GM10248 (cell line): ENCODE measurements at regions of chr4 and their contacts with region 1.

Region 1: GRCh38 chr4:82428969-82429727 is 1.1 kb downstream of the HNRNPDL start:
- DNase-seq: peak; percentile 95
- CTCF ChIP-seq: peak; percentile 93

Region 2: DNA sequence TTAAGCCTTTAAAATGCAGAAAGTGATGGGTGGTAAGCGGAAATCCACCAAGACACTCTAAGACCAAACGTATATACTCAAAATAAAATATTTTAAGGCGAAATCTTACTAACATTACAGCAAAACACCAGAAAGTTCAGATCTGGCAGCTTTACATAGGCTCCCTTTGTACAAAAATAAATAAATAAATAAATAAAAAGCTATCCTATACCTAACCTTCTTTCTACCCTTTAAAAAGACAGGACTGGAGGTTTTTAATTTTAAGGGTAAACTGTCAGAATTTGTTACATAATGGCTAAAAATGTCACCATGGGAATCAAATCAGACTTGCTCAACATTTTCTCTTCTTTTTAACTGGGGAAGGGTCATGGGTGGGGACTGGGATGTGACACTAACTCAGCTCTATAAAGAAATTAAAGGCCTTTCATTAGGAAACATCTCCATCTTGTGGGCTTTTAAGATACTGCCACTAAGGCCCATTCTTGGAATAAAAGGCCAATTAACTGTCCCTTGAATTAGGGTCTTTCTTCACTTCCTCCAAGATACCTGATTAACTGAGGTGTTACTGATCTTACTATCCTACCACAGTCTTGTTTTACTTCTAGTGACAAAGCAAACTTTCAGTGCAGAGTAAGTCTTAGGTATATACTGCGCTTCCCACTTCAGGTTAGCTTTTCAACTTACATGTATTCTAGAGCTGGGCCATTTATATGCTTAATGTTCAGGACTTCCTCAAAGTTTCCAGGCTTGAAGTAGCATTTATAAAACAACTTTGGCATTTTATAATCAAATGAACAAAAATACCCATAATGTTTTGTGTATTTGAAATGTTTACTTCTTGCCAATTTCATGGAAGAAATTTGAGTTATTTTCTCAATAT is 68.6 kb before region 1 on chr4:
- CTCF ChIA-PET with region 1: interaction called, 11 read pairs
- POLR2A ChIA-PET with region 1: interaction called, 4 read pairs
- DNase-seq: no peak
- CTCF ChIP-seq: peak; percentile 58

Region 3: DNA sequence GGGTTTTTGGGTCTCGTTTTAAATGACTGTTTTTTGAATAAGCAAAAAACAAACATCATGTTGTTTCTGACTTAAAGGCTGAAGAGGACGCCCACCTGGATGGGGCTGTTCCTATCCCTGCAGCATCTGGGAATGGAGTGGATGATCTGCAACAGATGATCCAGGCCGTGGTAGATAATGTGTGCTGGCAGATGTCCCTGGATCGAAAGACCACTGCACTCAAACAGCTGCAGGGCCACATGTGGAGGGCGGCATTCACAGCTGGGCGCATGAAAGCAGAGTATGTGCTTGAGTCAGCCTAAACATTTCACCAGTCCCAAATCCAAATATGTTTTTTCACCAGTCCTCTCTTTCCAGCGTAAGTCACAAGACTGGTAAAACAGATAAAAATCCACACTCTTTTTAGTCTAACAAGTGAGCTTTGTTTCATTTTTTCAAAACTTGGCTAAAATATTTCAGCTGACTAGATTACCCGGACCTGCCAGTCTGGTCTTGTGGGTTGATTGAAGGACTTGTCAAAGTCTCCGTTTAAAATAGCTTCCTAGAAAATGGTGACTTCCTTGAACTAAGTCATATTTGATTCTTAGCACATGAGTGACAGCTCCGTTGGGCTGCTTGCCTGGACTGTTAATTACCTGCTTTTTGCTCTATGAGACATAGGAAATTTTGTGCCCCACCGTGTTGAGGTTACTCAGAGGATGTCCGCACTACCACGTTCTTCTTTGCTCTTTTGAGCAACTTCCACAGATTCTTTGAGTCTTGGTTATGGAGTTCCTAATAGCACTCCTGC is 22.0 kb after region 1 on chr4:
- CTCF ChIA-PET with region 1: interaction called, 11 read pairs
- POLR2A ChIA-PET with region 1: interaction called, 6 read pairs
- DNase-seq: no peak
- CTCF ChIP-seq: no peak

Region 4: GRCh38 chr4:82495666-82496065 is 66.5 kb after region 1 on chr4:
- CTCF ChIA-PET with region 1: no interaction called
- POLR2A ChIA-PET with region 1: no interaction called
- DNase-seq: no peak
- CTCF ChIP-seq: no peak